ENCODE measurements at regions of chr2 and their contacts with region 1.

Region 1: DNA sequence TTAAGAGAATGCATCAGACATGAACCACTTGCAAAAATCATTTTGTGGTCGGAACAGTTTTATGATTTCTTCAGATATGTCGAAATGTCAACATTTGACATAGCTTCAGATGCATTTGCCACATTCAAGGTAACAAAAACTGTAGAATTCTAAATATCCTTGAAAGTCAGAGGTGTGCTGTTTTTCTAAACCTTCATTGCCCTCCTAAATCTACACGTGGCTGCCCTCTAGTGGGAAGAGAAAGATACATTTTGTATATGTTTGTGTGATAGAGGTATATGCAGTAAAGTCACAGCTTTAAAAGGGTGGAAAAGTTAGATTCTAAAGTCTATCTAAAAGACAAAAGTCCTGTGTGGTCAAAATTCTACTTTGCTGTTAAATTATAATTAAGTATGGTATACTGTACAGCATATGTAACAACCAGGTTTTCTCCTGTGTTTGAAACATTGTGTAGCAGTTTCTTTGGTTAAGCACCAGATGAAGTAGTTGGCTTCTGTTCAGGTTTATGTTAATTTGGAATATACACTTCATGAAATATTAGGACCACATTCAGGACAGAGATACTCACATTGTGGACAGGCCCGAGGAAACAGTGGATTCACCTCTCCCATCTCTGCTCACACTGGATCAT is 65.9 kb upstream of the ITM2C start:
- DNase-seq: no peak

Region 2: DNA sequence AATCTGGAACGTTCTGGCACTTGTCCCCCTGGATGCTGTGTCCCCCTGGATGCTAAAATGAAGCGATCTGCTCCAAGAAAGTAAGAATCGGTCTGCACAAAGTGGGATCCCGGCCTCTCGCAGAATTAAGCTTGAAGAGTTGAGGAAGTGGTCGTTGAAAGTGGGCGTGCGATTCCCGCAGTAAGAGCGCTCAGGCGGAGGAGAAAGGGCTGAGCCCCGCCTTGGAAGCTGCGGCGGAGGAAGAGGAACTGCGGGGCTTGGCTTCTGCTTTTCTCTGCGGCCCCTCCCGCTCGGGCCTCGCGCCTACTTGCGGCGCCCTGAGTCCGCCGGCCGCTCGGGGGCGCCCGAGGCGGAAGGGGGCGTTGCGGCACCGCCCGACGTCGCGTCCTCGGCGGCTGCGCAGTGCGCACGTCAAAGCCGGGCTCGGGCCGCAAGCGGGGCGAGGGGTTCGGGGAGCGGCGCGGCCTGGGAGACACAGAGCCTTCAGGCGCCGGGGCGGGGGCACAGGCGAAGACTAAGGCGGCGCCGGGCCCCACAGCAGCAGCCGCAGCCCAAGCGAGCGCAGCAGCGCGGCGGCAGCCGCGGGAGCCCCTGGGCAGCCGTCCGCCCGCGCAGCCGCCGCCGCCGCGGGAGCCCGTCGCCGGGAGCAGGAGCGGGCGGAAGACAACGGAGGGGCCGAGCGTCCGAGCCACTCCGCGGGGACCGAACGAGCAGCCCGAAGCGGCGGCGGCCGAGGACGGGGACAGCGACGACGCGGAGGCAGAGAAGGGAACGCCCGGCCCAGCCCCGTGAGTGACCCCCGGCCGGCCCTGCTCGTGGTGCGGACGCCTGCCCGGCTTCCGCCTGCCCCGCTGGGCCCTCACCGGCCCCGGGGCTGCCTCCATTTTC is 86.2 kb before region 1 on chr2 and contains the start of gene CAB39:
- intact Hi-C with region 1: loop called (anchors 5 kb)
- DNase-seq: peak; percentile 75 to 98 (median 84)

Region 3: GRCh38 chr2:231124838-231125568 is 326.1 kb after region 1 on chr2 and contains the start of gene HTR2B:
- intact Hi-C with region 1: no loop called
- DNase-seq: no peak